HEK293 (cell line): ENCODE measurements at regions of chr2 and their contacts with region 1.

Region 1: GRCh38 chr2:118003396-118003824 is 10.5 kb downstream of the CCDC93 start:
- H3K4me3 ChIP-seq: no peak overlapping the region
- H3K27ac ChIP-seq: no peak overlapping the region
- H3K4me1 ChIP-seq: no peaks in the 10 kb centered on the region
- CTCF ChIP-seq: peak; percentile 78

Region 2: DNA sequence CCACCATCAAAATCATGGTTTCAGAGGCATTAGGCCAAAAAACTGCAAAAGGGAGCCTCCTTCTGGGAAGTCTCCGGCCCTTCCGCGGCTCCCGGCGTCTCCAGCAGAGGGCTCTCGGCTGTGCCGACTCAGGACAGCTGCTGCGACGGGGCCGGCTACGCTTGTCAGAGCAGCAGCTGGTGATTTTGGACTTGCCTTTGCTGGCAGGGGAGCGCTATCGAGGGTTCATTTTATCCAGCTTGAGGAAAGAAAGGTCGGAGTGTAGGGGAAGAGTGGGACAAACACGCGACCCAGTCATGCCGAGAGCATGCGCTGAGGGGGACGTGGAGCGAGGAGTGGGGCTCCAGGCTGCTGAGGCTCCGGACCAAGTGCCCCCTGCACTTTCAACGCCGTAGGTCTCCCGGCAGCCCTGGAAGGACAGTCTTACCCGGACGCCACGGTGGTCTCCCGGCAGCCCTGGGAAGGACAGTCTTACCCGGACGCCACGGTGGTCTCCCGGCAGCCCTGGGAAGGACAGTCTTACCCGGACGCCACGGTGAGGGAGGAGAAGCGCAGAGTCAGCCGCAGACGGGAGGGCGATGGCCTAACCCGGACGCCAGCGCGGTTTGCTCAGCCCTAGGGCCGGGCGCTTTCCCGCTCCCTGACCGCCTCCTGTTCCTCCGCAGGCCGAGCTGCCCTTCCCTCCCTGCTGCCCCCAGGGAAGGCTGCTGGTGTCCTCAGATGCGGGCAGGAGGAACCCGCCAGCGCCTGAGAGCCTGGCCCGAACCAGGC is 167.2 kb before region 1 on chr2:
- CTCF ChIA-PET with region 1: interaction called, 26 read pairs
- POLR2A ChIA-PET with region 1: no interaction called
- H3K4me3 ChIP-seq: no peak overlapping the region
- H3K27ac ChIP-seq: no peak overlapping the region
- H3K4me1 ChIP-seq: no peaks in the 10 kb centered on the region
- CTCF ChIP-seq: peak; percentile 62

Region 3: DNA sequence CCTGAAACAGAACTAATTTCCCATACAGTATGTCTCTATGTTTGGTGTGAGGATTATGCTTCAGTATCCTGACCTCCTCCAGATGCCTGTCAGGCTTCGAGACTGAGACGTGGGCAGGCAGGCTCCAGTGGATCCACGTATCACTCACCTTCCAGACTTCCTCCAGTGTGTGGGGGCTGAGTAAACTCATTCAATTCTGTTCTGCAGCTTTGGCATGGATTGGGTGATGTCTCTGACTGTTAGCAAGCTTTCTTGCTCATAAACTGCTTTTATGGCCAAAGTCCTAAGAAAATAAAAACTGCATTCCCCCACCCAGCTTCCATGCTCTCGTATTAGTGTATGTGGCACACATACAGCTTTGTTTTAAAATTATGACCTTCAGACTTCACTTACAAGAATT is 43.2 kb before region 1 on chr2:
- CTCF ChIA-PET with region 1: interaction called, 21 read pairs
- POLR2A ChIA-PET with region 1: no interaction called
- H3K4me3 ChIP-seq: no peak overlapping the region
- H3K27ac ChIP-seq: no peak overlapping the region
- H3K4me1 ChIP-seq: 0 out of 2 replicates have a peak, but pooled peaks cover 3% of the 10 kb centered on the region
- CTCF ChIP-seq: no peak

Region 4: GRCh38 chr2:117987121-117987520 is 16.3 kb before region 1 on chr2:
- CTCF ChIA-PET with region 1: interaction called, 68 read pairs
- POLR2A ChIA-PET with region 1: no interaction called
- H3K4me3 ChIP-seq: no peak overlapping the region
- H3K27ac ChIP-seq: no peak overlapping the region
- H3K4me1 ChIP-seq: no peaks in the 10 kb centered on the region
- CTCF ChIP-seq: no peak

Region 5: DNA sequence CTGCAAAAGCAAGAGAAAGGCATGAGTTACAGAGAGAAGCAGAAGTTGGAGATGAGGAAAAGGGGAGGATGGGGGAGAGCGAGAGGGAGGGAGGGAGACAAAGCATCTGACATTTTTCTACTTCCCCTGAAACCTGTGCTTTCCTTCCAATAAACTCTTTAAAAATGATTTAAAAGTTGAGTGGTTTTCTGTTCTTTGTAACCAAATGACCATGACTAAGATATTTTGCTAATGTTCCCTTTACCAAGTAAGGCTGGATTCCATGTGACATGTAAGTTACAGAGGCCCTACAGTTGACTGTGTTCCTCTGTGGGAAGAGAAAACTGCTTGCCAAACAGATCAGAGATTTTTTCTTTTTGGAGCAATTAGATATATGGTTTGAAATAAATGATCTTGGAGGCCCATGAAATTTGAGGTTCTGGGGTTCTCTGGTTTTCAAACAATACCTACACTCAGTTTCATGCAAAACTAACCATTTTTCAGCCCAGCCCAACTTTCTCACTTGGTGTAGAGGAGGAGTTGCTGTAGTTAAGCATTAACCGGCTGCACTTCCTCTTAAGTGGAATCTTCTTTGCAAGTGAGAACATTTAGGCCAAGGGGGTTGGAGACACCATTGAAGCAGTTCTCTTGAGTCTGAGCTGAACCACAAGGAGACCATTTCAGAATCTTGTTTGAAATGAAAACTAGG is 119.3 kb after region 1 on chr2:
- CTCF ChIA-PET with region 1: no interaction called
- POLR2A ChIA-PET with region 1: no interaction called
- H3K4me3 ChIP-seq: no peak overlapping the region
- H3K27ac ChIP-seq: no peak overlapping the region
- H3K4me1 ChIP-seq: no peaks in the 10 kb centered on the region; the same call in 1 of the 2 replicates
- CTCF ChIP-seq: no peak